Left colon (tissue), 2 donors: ENCODE measurements at regions of chr2 and their contacts with region 1.

Region 1: DNA sequence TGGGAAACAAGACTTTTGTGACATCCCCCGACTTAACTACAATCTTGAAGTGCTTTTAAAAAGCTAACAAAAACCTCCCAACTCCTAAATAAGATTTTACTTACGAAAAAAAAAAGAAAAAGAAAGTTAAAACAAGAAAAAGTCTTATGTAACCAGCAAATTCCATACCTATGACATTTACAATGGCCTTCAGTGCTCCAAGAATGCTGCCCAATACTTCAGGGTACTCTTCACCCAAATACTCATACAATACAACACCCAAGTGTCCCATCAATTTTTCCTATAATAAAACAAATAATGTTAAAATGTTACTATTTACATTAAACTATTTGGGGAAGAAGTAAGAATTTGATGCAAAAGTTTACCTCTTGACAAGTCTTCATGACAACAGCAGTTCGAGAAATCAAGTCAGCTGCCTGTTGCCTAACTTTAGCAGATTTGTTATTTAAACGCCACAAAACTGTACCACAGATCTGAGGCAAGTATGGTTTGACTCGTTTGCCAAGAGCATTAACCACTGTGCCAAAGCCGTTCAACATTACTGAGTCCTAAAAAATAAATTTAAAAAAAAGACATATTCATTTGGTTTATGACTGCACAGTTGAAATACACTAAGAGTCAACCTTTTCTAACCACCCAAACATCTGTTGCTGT is 34.8 kb downstream of the SF3B1 start:
- DNase-seq: no peak
- ATAC-seq: no peak

Region 2: DNA sequence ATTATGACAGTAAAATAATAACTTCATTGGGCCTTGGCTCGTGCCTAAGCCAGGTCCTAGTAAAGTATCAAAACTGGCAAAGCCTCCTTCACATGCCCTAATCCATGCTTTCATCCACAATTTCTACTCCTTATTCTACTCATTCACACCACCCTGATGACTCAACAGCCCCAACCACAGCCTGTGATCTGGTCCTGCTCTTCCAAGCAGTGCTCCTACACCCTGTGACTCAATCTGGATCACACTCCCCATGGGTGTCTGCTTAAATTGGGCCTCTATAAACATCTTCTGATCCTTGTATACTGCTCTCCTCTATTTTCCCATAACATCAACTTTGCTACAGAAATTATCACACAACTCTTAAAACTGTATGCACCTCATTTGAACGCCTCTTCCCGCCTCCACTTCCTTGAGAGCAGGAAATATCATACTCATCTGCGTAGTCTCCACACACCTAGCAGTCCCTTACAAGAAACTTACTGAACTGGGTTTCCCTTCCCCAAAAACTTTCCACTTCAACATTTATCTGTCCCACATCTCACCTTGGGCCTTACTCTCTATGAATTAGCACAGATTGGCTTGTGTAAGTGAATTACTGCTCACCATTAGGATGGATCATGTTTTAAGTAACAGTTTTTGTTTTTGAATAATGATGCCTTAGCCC is 616.5 kb before region 1 on chr2:
- intact Hi-C with region 1: loop called in 1 of 2 experiments (anchors 10 kb)
- DNase-seq: no peak
- ATAC-seq: no peak

Region 3: GRCh38 chr2:197477797-197478196 is 77.8 kb after region 1 on chr2:
- intact Hi-C with region 1: loop called in 1 of 2 experiments (anchors 10 kb)
- DNase-seq: no peak
- ATAC-seq: no peak